Heart left ventricle (tissue), 16 donors: ENCODE measurements at regions of chr17 and their contacts with region 1.

Region 1: DNA sequence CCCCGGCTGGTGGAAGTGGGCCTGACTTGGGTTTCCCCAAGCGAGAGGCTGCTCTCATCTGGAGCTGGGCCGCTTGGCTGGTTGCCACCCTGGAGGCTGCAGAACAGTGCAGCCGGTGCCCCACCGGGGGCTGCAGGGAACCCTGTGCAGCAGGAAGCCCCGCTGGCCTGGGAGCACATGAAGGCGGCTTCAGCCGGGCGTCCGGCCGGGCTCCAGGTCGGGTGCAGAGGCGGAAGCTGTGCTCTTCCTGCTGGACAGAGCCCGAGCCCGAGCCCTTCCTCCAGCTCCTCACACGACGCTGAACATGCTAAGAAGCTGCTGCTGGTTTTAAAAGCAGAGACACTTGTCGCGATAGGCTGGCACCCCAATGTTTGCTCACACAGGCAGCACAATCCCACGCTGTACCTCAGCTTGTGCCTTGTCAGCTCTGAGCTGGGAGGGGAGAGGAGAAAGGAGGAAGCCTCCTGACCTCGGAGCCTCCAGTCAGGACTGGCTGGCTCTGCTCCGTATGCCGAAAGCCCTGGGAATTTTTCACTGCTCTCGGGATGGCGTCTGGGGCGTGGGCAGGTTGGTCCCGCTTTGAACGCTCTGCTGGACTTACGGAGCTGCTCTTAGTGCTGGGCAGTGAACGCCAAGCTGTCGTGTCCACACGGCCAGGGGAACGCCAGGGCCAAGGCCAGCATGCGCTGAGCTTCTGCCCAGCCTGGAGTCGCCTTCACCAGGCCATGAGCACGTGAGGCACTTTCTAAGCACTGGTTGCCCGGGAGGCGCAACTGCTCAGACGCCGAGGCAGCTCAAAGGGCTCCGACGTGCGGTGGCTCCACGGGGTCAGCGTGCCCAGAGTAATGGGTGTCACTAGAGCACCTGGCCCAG is 8.8 kb downstream of the CDK5R1 start:
- DNase-seq: peak in 4 of 5 donors; percentile 45 to 79 (median 60)
- ATAC-seq: peak; percentile 13 to 79 (median 58)
- H3K4me3 ChIP-seq: peak overlapping the region in 5 of 12 donors; percentile 6 to 18 (median 11)
- H3K27ac ChIP-seq: peak overlapping the region in 9 of 12 donors; percentile 18 to 78 (median 43)
- H3K4me1 ChIP-seq: peaks cover 0 to 50% (median 23%) of the 10 kb centered on the region in 12 donors
- H3K27me3 ChIP-seq: no peaks in the 10 kb centered on the region
- CTCF ChIP-seq: no peak
- POLR2A ChIP-seq: no peak

Region 2: GRCh38 chr17:32444308-32445073 is 51.1 kb before region 1 on chr17 and contains the start of gene PSMD11:
- intact Hi-C with region 1: no loop called
- DNase-seq: peak; percentile 98 to 99 (median 99)
- ATAC-seq: peak; percentile 97 to 98 (median 98)
- H3K4me3 ChIP-seq: peak within 1 kb of the TSS; percentile 66 to 98 (median 88)
- H3K27ac ChIP-seq: peak within 1 kb of the TSS; percentile 19 to 93 (median 84)
- H3K4me1 ChIP-seq: peaks cover 0 to 32% (median 18%) of the 10 kb centered on the region in 12 donors
- H3K27me3 ChIP-seq: no peaks in the 10 kb centered on the region
- CTCF ChIP-seq: peak in 7 of 12 donors; percentile 2 to 100 (median 96)
- POLR2A ChIP-seq: peak in 1 of 2 donors; percentile 66
- total RNA-seq, gene PSMD11: 52.7 to 94.8 (median 78.9) TPM

Region 3: DNA sequence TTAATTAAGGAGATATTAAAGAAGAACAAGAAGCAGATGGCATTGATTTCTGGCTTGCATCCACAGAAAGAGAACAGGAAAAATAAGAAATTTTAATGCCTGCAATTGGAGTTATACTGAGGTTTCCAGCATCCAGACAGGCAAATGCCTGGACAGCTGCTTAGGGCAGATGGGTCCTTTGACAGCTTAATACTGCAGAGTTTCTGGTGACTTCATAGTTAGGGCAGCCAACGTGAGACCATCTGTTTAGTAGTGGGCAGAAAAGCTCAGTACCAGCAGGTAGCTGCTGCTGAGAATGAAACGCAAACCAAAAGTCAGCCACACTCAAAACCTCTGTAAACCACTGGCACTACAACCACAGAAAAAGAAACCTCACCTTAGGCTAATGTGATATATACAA is 101.0 kb after region 1 on chr17:
- intact Hi-C with region 1: loop called in 1 of 10 experiments (anchors 10 kb)
- DNase-seq: no peak
- ATAC-seq: no peak
- H3K4me3 ChIP-seq: no peak overlapping the region
- H3K27ac ChIP-seq: no peak overlapping the region
- H3K4me1 ChIP-seq: no peaks in the 10 kb centered on the region
- H3K27me3 ChIP-seq: no peaks in the 10 kb centered on the region
- CTCF ChIP-seq: no peak
- POLR2A ChIP-seq: no peak

Region 4: DNA sequence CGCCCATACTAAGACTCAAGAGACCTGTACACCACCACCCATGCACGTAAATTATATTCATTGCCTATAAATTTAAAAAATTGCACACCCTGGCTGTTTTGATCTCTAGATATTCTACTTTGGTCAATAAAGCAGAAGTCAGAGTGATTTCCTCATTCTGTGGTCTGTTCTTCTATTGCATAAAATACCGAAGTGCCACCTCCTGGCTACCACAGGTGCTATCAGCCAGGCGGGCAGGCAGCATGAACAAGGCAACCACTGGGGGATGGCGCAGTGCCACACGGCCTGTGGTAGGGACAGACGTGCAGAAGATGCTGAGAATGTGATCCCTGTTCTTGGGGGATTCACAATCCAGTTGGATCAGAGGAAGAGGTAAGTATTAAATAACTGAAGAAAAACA is 113.5 kb after region 1 on chr17:
- intact Hi-C with region 1: loop called in 1 of 10 experiments (anchors 10 kb)
- DNase-seq: peak; percentile 43 to 80 (median 57)
- ATAC-seq: peak; percentile 61 to 81 (median 74)
- H3K4me3 ChIP-seq: no peak overlapping the region
- H3K27ac ChIP-seq: no peak overlapping the region
- H3K4me1 ChIP-seq: no peaks in the 10 kb centered on the region
- H3K27me3 ChIP-seq: no peaks in the 10 kb centered on the region
- CTCF ChIP-seq: peak; percentile 10 to 48 (median 32)
- POLR2A ChIP-seq: no peak

Region 5: GRCh38 chr17:32803544-32803943 is 307.9 kb after region 1 on chr17:
- intact Hi-C with region 1: no loop called
- DNase-seq: no peak
- ATAC-seq: no peak
- H3K4me3 ChIP-seq: no peak overlapping the region
- H3K27ac ChIP-seq: no peak overlapping the region
- H3K4me1 ChIP-seq: peaks cover 0 to 31% (median 0%) of the 10 kb centered on the region in 12 donors
- H3K27me3 ChIP-seq: no peaks in the 10 kb centered on the region
- CTCF ChIP-seq: no peak
- POLR2A ChIP-seq: no peak